ENCODE measurements at regions of chr17 and their contacts with region 1.

Region 1: GRCh38 chr17:40062329-40063186 is at the start of gene THRA:
- DNase-seq: peak; percentile 23
- ATAC-seq: peak; percentile 85
- H3K4me3 ChIP-seq: peak within 1 kb of the TSS; percentile 95
- H3K27ac ChIP-seq: peak within 1 kb of the TSS; percentile 64
- H3K4me1 ChIP-seq: peaks cover 22% of the 10 kb centered on the region
- H3K27me3 ChIP-seq: no peaks in the 10 kb centered on the region
- CTCF ChIP-seq: peak; percentile 36; the same call in 1 of the 2 replicates
- POLR2A ChIP-seq: no peak
- RAD21 ChIP-seq: peak; percentile 42
- total RNA-seq, gene THRA: 20.8 and 22.0 TPM in 2 replicates

Region 2: DNA sequence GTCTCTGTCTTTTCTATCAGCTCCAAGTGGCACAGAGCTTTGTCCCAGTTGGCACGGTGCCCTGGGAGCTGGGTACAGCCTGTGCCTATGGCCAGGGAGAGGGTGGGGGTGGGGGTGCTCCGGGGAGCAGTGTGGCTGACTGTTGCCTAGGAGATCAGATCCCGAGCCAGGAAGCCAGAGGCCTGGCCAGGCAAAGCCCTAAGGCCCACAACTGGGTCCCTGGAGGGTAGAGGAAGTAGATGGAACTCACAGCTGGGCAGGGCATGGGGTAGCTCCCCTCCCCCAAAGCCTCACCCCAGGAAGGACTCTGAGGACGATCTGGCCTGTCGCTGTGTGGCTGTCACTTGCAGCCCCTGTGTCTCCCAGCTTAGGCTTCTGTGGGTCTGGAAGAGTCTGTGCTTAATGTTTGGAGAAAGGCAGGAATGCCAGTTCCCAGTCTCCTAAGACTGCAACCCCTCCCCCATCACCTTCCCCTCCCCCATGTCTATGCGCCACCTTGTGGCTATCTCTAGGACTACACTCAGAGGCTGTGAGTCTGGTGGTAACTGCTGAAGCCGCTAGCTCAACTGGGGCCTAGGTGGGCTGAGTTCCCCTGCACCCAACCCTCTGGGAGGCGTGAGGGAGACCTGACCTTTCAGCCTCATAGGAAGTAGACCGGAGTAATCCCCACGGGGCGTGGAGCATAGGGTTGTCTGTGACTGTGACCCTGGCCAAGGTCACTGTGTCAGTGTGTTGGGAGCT is 12.8 kb after region 1 on chr17:
- CTCF ChIA-PET with region 1: interaction called, 24 read pairs
- POLR2A ChIA-PET with region 1: no interaction called
- dilution Hi-C with region 1: no loop called
- in situ Hi-C with region 1: no loop called
- intact Hi-C with region 1: no loop called
- DNase-seq: peak; percentile 48
- ATAC-seq: peak; percentile 85
- H3K4me3 ChIP-seq: no peak overlapping the region
- H3K27ac ChIP-seq: peak overlapping the region; percentile 24; the same call in 1 of the 2 replicates
- H3K4me1 ChIP-seq: peaks cover 31% of the 10 kb centered on the region
- H3K27me3 ChIP-seq: no peaks in the 10 kb centered on the region
- CTCF ChIP-seq: peak; percentile 85
- POLR2A ChIP-seq: no peak
- RAD21 ChIP-seq: peak; percentile 67

Region 3: DNA sequence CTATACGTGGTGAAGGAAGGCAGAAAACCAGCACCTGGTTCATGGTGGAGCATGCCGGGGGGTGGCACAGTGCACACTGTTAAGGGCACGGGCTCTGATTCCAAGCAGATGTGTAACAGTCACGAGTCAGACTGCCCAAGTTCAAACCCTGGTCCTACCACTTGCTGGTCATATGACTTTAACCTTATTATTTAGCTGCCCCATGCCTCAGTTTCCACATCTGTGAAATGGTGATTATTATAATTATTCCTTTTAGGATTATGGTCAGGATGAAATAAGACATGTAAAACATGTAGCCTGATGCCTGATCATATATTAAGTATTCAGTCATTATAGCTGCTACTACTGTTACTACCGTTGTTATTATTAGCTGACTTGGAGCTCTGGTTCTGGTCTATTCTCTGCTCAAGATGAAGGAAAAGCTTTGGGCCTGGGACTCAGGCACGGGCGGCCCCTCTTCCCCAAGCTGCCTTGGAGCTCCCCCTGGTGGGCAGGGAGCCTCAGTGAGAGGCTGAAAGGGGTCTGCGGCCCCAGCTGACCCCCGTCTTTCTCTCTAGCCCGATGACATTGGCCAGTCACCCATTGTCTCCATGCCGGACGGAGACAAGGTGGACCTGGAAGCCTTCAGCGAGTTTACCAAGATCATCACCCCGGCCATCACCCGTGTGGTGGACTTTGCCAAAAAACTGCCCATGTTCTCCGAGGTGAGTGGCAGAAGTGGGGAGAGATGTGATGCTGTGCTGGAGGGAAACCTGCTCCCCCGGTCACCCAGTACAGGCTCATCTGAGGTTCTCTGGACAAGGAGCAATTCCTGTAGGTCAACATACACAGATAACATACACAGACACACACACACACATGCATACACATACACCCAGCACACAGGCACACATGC is 23.8 kb after region 1 on chr17:
- CTCF ChIA-PET with region 1: interaction called, 10 read pairs
- POLR2A ChIA-PET with region 1: interaction called, 6 read pairs
- dilution Hi-C with region 1: no loop called
- in situ Hi-C with region 1: no loop called
- intact Hi-C with region 1: loop called (anchors 2 kb)
- DNase-seq: no peak
- ATAC-seq: peak; percentile 83
- H3K4me3 ChIP-seq: no peak overlapping the region
- H3K27ac ChIP-seq: no peak overlapping the region
- H3K4me1 ChIP-seq: no peaks in the 10 kb centered on the region; the same call in 1 of the 2 replicates
- H3K27me3 ChIP-seq: no peaks in the 10 kb centered on the region
- CTCF ChIP-seq: peak; percentile 68
- POLR2A ChIP-seq: no peak
- RAD21 ChIP-seq: peak; percentile 80